PC-3 (cell line): ENCODE measurements at regions of chr2 and their contacts with region 1.

Region 1: DNA sequence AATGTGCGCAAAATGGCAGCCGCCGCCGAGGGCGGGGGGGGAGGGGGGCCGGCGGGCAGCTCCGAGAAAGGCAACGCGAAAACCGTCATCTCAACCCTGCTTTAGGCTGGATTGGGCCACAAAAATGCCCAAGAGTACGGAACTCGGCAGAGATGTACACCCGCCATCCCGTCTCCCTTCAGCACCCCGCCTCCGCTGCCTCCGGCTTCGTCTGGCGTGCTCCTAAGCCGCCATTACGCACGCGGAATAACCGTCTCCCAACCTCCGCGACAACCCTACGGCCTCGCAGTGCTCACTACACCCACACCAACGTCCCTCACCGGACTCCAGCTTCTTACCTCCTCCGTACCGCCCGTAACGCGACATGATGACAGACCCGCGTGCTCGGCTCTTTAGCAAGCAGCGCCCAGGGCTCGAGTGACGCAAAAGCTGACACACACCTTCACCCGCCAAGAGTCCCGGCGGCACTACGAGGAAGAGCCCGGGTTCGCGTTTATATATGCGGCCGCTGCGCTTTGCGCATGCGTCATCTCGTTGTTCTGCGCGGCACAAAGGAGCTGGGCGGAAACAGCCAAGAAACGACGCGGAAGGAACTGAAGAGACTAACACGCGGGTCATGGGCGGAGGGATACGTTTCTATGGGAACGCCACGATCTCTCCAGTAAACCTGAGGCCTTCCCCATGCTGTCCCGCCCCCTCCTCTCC is at the start of gene SRSF7:
- DNase-seq: peak; percentile 99
- ATAC-seq: peak; percentile 71
- H3K4me3 ChIP-seq: peak within 1 kb of the TSS; percentile 98
- H3K27ac ChIP-seq: peak within 1 kb of the TSS; percentile 68
- H3K4me1 ChIP-seq: peaks cover 34% of the 10 kb centered on the region
- H3K27me3 ChIP-seq: no peaks in the 10 kb centered on the region
- CTCF ChIP-seq: no peak
- total RNA-seq, gene SRSF7: 148 and 160 TPM in 2 replicates

Region 2: DNA sequence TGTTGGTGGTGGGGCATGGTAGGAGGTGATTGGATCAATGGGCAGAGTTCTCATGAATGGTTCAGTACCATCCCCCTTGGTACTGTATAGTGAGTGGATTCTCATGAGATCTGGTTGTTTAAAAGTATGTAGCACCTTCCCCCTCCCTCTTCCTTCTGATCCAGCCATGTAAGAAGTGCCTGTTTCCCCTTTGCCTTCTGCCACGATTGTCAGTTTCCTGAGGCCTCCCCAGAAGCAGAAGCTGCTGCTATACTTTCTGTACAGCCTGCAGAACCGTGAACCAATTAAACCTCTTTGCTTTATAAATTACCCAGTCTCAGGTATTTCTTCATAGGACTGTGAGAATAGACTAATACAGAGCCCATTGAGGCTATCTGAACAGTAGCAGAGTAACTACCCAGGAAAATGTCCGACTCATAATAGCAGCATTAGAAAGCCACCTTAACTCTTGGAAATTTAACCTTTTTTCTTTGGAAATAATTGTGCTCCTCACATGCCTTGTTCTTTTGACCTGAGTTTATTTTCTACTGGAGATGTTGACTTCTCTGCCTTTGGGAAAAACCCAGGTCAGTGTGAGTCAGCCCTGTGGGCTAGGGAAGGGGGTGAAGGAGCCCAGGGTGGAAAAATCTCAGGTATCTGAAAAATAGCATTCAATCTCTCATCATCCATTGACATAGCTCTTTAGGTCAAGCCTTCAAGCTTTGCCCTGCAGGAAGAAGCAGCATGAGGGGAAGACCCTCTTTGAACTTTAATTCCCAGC is 693.2 kb before region 1 on chr2:
- CTCF ChIA-PET with region 1: no interaction called
- POLR2A ChIA-PET with region 1: no interaction called
- intact Hi-C with region 1: no loop called
- DNase-seq: peak; percentile 60
- ATAC-seq: peak; percentile 59
- H3K4me3 ChIP-seq: no peak overlapping the region
- H3K27ac ChIP-seq: no peak overlapping the region
- H3K4me1 ChIP-seq: peaks cover 12% of the 10 kb centered on the region
- H3K27me3 ChIP-seq: no peaks in the 10 kb centered on the region
- CTCF ChIP-seq: no peak

Region 3: DNA sequence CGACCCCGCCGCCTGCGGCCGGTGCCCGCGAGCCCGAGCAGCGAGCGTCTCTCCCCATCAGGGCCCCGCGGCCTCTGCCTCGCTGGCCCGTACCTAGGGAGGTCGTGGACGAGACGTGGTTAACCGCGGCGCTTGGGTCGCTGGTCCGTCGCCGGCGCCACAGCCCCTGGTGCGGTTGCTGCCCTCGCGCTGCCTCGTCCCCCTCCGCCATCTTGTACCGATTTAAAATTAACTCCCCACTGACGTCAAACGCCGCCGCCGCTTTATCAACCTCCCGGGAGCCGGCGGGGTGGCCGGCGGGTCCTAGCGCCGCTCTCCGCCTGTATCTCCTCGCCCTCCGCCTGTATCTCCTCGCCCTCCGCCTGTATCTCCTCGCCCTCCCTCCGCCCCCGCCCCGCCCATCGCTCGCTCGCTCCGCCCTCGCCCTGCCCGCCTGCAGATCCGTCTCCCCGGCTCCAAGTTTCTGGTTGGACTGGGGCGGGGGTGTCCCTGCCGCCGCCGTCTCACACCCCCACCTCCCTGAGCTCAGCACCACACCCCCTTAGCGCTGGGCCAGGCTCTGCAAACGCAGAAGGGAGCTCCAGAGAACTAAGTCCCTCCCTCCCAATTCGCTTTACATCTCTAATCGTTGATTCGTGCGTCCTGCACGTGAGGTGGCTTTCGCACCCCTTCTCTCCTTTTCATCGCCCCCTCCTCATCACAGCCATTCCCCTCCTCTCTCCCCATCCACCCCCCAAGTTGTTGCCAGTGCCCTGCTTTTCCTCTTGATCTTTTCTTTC is 373.8 kb before region 1 on chr2 and contains the start of gene ATL2:
- CTCF ChIA-PET with region 1: no interaction called
- POLR2A ChIA-PET with region 1: no interaction called
- intact Hi-C with region 1: loop called (anchors 5 kb)
- DNase-seq: peak; percentile 93
- ATAC-seq: peak; percentile 74
- H3K4me3 ChIP-seq: peak within 1 kb of the TSS; percentile 74
- H3K27ac ChIP-seq: peak within 1 kb of the TSS; percentile 73
- H3K4me1 ChIP-seq: peaks cover 23% of the 10 kb centered on the region
- H3K27me3 ChIP-seq: no peaks in the 10 kb centered on the region
- CTCF ChIP-seq: no peak
- total RNA-seq, gene ATL2: 65.3 and 89.4 TPM in 2 replicates

Region 4: GRCh38 chr2:38690499-38691294 is 60.3 kb before region 1 on chr2:
- CTCF ChIA-PET with region 1: no interaction called
- POLR2A ChIA-PET with region 1: interaction called, 17 read pairs
- intact Hi-C with region 1: no loop called
- DNase-seq: peak; percentile 96
- ATAC-seq: peak; percentile 88
- H3K4me3 ChIP-seq: peak overlapping the region; percentile 20; the same call in 1 of the 2 replicates
- H3K27ac ChIP-seq: peak overlapping the region; percentile 96
- H3K4me1 ChIP-seq: peaks cover 56% of the 10 kb centered on the region
- H3K27me3 ChIP-seq: no peaks in the 10 kb centered on the region
- CTCF ChIP-seq: no peak

Region 5: DNA sequence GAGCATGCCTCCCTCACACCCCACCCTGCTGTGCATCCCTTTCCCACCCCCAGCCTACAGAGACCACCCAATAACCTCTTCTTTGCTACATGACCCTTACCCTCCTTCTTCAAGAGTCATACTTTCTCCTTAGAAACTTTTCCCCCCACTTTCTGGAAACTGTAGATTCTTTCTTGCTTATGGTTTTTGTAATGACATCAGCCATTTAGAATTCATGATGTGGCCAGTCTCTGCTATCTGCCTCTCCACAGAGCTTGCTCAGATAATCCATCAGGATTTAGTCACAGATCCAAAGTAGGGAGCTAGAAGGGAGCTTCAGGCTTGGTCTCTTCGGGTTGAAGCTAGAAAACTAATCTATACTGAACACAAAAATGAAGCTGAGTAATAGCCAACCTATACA is 48.6 kb before region 1 on chr2:
- CTCF ChIA-PET with region 1: no interaction called
- POLR2A ChIA-PET with region 1: no interaction called
- intact Hi-C with region 1: no loop called
- DNase-seq: peak; percentile 20
- ATAC-seq: no peak
- H3K4me3 ChIP-seq: no peak overlapping the region
- H3K27ac ChIP-seq: no peak overlapping the region
- H3K4me1 ChIP-seq: peaks cover 13% of the 10 kb centered on the region; the same call in 1 of the 2 replicates
- H3K27me3 ChIP-seq: no peaks in the 10 kb centered on the region
- CTCF ChIP-seq: no peak

Region 6: DNA sequence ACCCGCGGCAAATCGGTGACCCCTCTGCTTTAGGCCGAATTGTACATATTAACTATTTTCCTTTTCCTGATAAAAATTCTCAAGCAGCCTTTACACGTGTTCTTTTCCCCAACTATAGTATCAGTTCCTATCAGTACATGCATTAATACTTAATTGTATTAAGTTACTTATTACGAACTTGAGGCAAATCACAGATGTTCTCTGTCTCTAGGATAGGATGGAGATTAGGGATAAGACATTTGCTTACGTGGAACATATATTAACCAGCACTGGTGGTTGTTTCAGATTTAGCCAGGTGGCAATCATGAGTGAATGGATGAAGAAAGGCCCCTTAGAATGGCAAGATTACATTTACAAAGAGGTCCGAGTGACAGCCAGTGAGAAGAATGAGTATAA is 27.6 kb after region 1 on chr2:
- CTCF ChIA-PET with region 1: interaction called, 4 read pairs
- POLR2A ChIA-PET with region 1: interaction called, 3 read pairs
- intact Hi-C with region 1: loop called (anchors 1 kb)
- DNase-seq: no peak
- ATAC-seq: no peak
- H3K4me3 ChIP-seq: peak overlapping the region; percentile 87
- H3K27ac ChIP-seq: no peak overlapping the region
- H3K4me1 ChIP-seq: peaks cover 9% of the 10 kb centered on the region; the same call in 1 of the 2 replicates
- H3K27me3 ChIP-seq: no peaks in the 10 kb centered on the region
- CTCF ChIP-seq: no peak

Region 7: DNA sequence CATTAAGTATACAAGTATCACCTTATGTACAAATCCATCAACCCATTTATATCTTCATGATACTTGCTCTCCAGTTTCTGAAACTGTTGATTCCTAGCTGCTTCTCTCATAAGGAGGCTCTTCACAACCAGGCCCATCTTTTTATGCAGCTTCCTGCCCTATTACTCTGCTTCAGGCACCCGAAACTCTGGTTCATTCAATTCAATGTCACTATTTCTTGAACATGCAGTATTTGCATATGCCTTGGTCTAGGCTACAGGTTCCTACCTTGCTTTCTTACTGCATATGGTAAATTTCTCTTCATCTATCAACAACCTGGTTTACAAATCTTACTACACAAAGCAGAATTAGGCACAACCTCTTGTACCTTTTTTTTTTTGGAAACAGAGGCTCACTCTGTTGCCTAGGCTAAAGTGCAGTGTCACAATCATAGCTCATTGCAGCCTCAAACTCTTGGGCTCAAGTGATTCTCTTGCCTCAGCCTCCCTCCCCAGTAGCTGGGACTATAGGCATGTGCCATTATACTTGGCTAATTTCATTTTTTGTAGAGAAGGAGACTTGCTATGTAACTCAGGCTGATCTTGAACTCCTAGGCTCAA is 495.4 kb after region 1 on chr2:
- CTCF ChIA-PET with region 1: no interaction called
- POLR2A ChIA-PET with region 1: interaction called, 10 read pairs
- intact Hi-C with region 1: no loop called
- DNase-seq: no peak
- ATAC-seq: no peak
- H3K4me3 ChIP-seq: no peak overlapping the region
- H3K27ac ChIP-seq: no peak overlapping the region
- H3K4me1 ChIP-seq: no peaks in the 10 kb centered on the region
- H3K27me3 ChIP-seq: no peaks in the 10 kb centered on the region
- CTCF ChIP-seq: no peak